BJ (cell line): ENCODE measurements at regions of chr3 and their contacts with region 1.

Region 1: GRCh38 chr3:171049861-171050444 is 23.4 kb upstream of the SLC2A2 start:
- DNase-seq: no peak
- H3K4me3 ChIP-seq: no peak overlapping the region
- H3K27me3 ChIP-seq: no peaks in the 10 kb centered on the region
- CTCF ChIP-seq: peak; percentile 74

Region 2: GRCh38 chr3:170961616-170962400 is 88.1 kb before region 1 on chr3:
- CTCF ChIA-PET with region 1: interaction called, 11 read pairs
- POLR2A ChIA-PET with region 1: no interaction called
- DNase-seq: no peak
- H3K4me3 ChIP-seq: no peak overlapping the region
- H3K27me3 ChIP-seq: no peaks in the 10 kb centered on the region
- CTCF ChIP-seq: peak; percentile 51

Region 3: DNA sequence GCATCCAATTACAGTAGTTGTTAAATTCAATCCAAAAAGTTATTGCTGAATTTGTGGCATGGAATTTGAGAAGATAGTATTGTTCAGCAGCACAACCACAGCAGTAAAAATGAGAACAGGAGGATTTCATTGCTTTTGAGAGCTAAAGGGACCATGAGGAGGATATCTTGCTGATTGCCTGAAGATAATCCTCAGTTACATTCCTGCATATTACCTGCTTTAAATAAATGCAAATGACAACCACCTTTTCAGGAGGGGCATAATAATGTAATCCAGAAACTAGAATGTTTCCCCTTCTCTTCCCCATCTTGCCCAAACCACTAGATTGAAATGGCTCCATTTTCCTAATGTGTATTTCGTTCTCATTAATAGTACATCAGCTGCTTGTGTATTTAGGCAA is 11.8 kb after region 1 on chr3:
- CTCF ChIA-PET with region 1: interaction called, 10 read pairs
- POLR2A ChIA-PET with region 1: no interaction called
- DNase-seq: no peak
- H3K4me3 ChIP-seq: no peak overlapping the region
- H3K27me3 ChIP-seq: no peaks in the 10 kb centered on the region
- CTCF ChIP-seq: no peak